Heart left ventricle (tissue), 16 donors: ENCODE measurements at regions of chr4 and their contacts with region 1.

Region 1: DNA sequence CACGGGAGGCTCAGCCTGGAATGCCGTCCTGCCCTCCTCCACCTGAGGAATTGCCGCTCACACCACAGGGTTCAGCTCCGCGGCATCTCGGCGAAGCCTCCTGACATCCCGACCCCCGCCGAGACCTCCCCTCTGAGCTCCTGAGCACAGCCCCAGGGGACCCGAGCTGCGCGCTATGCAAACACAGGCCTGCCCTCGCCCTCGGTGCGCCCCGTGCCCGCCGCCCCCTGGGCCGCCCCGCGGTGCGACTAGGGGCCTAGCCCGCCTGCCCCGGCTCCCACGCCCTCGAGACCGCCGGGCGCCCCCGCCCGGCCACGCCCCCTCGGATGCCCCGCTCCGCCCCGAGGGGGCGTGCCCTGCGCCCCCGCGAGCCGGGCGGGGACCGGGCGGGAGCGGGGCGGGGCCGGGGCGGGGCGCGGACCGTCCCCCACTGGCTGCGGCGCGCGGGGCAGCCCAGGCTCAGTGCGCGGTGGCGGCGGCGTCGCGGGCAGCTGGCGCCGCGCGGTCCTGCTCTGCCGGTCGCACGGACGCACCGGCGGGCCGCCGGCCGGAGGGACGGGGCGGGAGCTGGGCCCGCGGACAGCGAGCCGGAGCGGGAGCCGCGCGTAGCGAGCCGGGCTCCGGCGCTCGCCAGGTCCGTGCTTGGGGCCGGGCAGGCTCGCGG is at the start of gene FGFR3:
- DNase-seq: peak in 2 of 5 donors; percentile 54 to 58
- ATAC-seq: peak in 3 of 4 donors; percentile 77 to 88 (median 77)
- H3K4me3 ChIP-seq: peak within 1 kb of the TSS; percentile 25 to 65 (median 54)
- H3K27ac ChIP-seq: peak within 1 kb of the TSS in 2 of 12 donors; percentile 43 to 45
- H3K4me1 ChIP-seq: peaks cover 0 to 36% (median 14%) of the 10 kb centered on the region in 12 donors
- H3K27me3 ChIP-seq: peaks cover 19 to 44% (median 31%) of the 10 kb centered on the region in 9 donors
- CTCF ChIP-seq: no peak
- POLR2A ChIP-seq: no peak
- total RNA-seq, gene FGFR3: 1.2 to 4.6 (median 2.3) TPM

Region 2: GRCh38 chr4:1759818-1760223 is 33.1 kb before region 1 on chr4:
- intact Hi-C with region 1: loop called in 2 of 10 experiments (anchors 5 kb)
- DNase-seq: no peak
- ATAC-seq: no peak
- H3K4me3 ChIP-seq: no peak overlapping the region
- H3K27ac ChIP-seq: peak overlapping the region in 4 of 12 donors; percentile 14 to 67 (median 34)
- H3K4me1 ChIP-seq: peaks cover 0 to 18% (median 7%) of the 10 kb centered on the region in 12 donors
- H3K27me3 ChIP-seq: peaks cover 0 to 16% (median 0%) of the 10 kb centered on the region in 9 donors
- CTCF ChIP-seq: no peak
- POLR2A ChIP-seq: no peak